ENCODE measurements at regions of chr1 and their contacts with region 1.

Region 1: GRCh38 chr1:185317034-185317885 is at the start of gene IVNS1ABP:
- DNase-seq: peak; percentile 89 to 96
- ATAC-seq: peak; percentile 84 to 88
- H3K4me3 ChIP-seq: peak within 1 kb of the TSS; percentile 89
- H3K27ac ChIP-seq: peak within 1 kb of the TSS; percentile 87 to 94
- H3K4me1 ChIP-seq: peaks cover 47% of the 10 kb centered on the region
- CTCF ChIP-seq: peak; percentile 64
- EP300 ChIP-seq: no peak
- POLR2A ChIP-seq: peak; percentile 90
- RAD21 ChIP-seq: peak; percentile 69 to 95
- polyA plus RNA-seq, gene IVNS1ABP: 62.9 and 71.4 TPM in 2 replicates

Region 2: DNA sequence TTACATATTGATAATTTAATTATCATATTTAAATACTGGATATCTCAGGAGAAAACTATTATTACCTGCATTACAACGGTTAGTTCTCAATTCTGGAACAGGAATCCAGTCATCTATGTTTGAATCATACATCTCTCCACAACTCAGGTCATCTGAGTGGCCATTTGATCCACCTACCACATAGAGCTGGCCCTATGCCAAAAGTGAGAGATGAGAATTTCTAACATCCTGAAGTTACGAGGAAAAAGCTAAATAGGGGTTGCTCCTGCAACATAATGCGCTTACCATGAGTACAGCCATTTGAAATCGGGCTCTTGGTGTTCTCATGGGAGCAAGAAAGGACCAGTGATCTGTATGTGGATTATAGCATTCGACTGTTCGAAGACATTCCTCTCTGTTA is 17.1 kb before region 1 on chr1:
- CTCF ChIA-PET with region 1: no interaction called
- POLR2A ChIA-PET with region 1: no interaction called
- DNase-seq: no peak
- ATAC-seq: no peak
- H3K4me3 ChIP-seq: no peak overlapping the region
- H3K27ac ChIP-seq: no peak overlapping the region
- H3K4me1 ChIP-seq: no peaks in the 10 kb centered on the region
- CTCF ChIP-seq: no peak
- EP300 ChIP-seq: no peak
- POLR2A ChIP-seq: no peak
- RAD21 ChIP-seq: no peak

Region 3: DNA sequence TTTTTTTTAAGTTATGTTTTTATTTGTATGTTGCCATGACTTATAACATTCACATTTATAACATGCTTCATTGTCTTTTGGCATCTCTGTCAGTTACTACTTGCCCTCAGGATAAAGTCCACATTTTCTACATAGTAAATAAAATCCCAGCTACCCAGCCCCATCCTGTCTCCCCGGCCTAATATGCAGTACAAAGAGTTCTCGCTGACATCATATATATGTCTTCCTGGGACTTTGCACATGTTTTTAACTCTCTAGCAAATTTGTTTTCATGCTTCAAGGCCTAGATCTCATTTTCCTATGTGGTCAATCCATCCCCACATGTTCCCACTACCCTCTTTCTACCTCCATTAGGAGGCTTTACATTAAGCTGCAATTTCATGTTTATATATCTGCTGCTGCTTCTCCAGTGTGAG is 32.8 kb after region 1 on chr1:
- CTCF ChIA-PET with region 1: interaction called, 11 read pairs
- POLR2A ChIA-PET with region 1: interaction called, 3 read pairs
- DNase-seq: no peak
- ATAC-seq: no peak
- H3K4me3 ChIP-seq: no peak overlapping the region
- H3K27ac ChIP-seq: no peak overlapping the region
- H3K4me1 ChIP-seq: no peaks in the 10 kb centered on the region
- CTCF ChIP-seq: no peak
- EP300 ChIP-seq: no peak
- POLR2A ChIP-seq: no peak
- RAD21 ChIP-seq: no peak

Region 4: DNA sequence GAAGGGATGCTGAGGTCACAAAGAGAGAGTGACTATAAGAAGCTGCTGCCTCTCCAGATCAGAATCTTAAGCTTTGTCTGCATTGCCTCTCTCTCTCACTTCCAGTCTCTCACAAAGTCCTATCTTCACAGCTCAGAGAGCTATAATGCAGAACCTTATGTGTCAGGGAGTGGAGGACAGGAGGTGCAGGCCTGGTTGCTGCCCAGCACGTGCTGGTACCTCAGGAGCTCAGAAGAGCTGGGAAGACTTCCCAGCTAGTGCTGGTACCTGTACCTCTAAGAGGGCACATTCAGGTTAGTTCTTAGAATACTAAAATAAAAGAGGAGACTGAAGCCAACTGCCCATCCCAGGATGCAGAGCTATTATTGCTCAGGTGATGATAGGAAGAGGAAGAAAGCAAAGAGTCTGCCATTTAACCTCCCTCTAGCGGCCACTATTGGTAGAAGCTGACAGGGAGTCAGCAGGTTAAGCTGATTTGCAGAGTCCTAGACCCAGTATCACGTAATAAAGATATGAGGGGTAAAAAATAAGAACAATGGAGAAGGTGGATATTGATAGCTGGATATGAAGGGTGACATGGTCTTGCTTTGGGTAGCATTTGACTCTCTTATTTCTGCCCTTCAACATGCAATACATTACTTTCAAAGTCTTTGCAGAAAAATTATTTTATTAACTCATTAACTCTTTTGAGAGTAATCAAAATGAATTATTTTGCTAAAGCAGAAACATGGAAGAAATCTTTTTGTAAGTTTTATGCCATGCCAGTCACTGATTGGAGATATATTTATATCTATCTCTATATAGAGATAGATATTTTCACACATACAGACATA is 278.8 kb after region 1 on chr1:
- CTCF ChIA-PET with region 1: interaction called, 23 read pairs
- POLR2A ChIA-PET with region 1: interaction called, 9 read pairs
- DNase-seq: peak; percentile 58 to 67
- ATAC-seq: peak; percentile 83 to 95; a peak in 5 of 6 replicates
- H3K4me3 ChIP-seq: no peak overlapping the region
- H3K27ac ChIP-seq: no peak overlapping the region; a peak in 1 of 6 replicates
- H3K4me1 ChIP-seq: peaks cover 10% of the 10 kb centered on the region
- CTCF ChIP-seq: peak; percentile 58
- EP300 ChIP-seq: no peak
- POLR2A ChIP-seq: no peak
- RAD21 ChIP-seq: peak; percentile 59 to 66

Region 5: DNA sequence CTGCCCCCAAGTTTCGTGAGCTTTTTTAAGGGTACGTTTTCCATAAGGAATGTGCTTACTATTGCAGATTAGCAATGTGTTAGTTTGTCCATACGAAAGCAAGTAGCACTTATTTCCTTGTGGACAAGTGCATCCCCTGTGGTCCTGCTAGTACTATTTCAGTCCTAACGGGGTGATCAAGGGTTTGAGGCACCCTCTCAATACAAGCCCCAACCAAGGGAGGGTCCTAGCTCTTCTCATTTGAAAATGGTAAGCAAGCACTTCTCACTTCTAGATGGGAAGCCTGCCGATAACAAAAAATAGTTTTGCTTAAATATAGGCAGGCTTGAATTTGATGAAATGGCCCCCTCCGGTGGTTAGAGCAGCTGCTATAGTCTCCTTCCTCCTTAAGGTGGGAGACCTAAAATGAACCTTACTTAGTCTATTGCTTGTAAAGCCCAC is 352.9 kb after region 1 on chr1:
- CTCF ChIA-PET with region 1: interaction called, 10 read pairs
- POLR2A ChIA-PET with region 1: interaction called, 3 read pairs
- DNase-seq: peak in 1 of 2 experiments; percentile 50
- ATAC-seq: peak; percentile 64 to 85; a peak in 5 of 6 replicates
- H3K4me3 ChIP-seq: no peak overlapping the region
- H3K27ac ChIP-seq: peak overlapping the region in 1 of 2 experiments; percentile 51; a peak in 1 of 6 replicates
- H3K4me1 ChIP-seq: peaks cover 10% of the 10 kb centered on the region
- CTCF ChIP-seq: peak; percentile 62
- EP300 ChIP-seq: no peak
- POLR2A ChIP-seq: no peak
- RAD21 ChIP-seq: peak; percentile 80 to 84

Region 6: DNA sequence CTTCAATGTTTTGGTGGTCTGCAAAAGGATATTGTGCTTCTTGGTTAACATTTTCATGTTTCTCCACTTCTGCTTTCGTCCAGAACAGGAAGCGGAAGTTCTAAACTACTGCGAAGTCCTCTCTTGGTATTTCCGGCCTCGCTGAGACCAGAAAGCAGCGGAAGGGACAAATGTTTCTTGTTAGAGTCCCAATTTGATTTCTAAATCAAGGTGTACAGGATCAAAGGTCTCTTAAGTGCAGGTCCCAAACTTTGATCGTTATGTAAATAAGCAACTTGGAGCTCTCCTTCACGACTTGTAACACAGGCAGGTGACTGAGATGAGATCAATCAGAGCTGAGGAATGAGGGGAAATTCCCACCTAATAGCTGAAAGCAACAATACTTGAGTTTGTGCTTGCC is 376.8 kb after region 1 on chr1:
- CTCF ChIA-PET with region 1: interaction called, 13 read pairs
- POLR2A ChIA-PET with region 1: interaction called, 3 read pairs
- DNase-seq: no peak
- ATAC-seq: no peak
- H3K4me3 ChIP-seq: no peak overlapping the region
- H3K27ac ChIP-seq: no peak overlapping the region
- H3K4me1 ChIP-seq: peaks cover 8% of the 10 kb centered on the region; the same call in 2 of the 3 replicates
- CTCF ChIP-seq: no peak
- EP300 ChIP-seq: no peak
- POLR2A ChIP-seq: no peak
- RAD21 ChIP-seq: no peak

Measured in A549 (cell line).